Activated T-helper 1 cell treated with anti-CD3 and anti-CD28 coated beads, Interleukin-12 subunit alpha, Interleukin-12 subunit beta, Interleukin-2, Interleukin-4 antibody, amounts not matched to agents 30 ng/mL and 10 ng/mL and 1 ng/mL, durations not matched to agents 14 hours and 24 hours and 36 hours (primary cell): ENCODE measurements at regions of chr18 and their contacts with region 1.

Region 1: DNA sequence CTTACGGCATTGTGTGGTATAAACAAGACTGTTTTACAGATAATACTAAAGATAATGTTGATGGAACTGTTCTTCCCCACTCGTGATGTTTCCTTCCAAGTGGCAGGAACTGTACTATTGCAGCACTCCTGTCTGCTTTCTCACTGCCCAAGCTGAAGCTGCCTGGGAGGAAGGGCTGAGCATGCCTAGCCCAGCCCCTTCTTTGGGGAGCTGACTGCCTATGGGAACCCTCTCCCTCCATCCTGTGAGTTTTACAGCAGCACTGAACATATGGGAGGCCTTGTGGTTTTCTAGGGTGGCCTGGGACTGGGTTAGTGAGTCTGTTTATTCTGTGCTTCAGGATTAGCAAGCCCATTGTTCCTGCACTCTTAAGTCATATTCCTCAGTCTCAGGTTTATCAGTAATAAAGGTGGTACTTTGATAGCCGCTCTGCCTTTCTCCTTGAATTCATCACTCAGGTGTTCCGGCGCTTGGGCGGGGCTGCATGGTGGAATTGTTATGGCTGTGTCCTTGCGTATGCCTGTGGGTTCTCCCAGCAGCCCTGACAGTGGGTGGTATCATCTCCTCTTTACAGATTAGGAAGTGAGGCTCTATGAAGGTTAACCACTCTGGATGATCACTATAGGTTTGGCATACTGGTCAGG is 379.7 kb downstream of the PTPRM start:
- DNase-seq: peak; percentile 7
- H3K4me3 Mint-ChIP-seq: peak overlapping the region; percentile 85
- H3K27ac Mint-ChIP-seq: peak overlapping the region; percentile 57
- H3K4me1 Mint-ChIP-seq: peaks cover 12% of the 10 kb centered on the region
- H3K27me3 Mint-ChIP-seq: no peaks in the 10 kb centered on the region

Region 2: DNA sequence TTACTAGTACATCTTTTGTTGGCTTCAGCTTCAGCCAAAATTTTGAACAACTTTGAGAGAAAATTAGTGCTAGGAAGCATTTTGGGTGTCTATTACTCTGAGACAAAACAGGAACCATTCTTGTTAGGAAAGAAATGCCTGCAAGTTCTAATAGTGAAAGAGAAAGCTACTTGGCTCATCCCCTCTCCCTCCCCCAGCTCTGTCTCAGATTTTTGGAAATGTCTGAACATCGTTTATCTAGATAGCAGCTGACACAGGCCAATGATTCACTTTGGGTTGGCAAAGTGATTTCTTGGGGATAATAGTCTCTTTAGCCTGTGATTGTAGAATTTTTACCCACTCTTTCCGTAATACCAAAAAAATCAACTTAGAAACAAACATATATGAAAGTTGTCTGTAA is 422.1 kb before region 1 on chr18:
- intact Hi-C with region 1: no loop called
- DNase-seq: no peak
- H3K4me3 Mint-ChIP-seq: no peak overlapping the region
- H3K27ac Mint-ChIP-seq: no peak overlapping the region
- H3K4me1 Mint-ChIP-seq: no peaks in the 10 kb centered on the region
- H3K27me3 Mint-ChIP-seq: no peaks in the 10 kb centered on the region

Region 3: GRCh38 chr18:7958081-7958896 is 11.4 kb after region 1 on chr18:
- intact Hi-C with region 1: loop called (anchors 1 kb)
- DNase-seq: no peak
- H3K4me3 Mint-ChIP-seq: peak overlapping the region; percentile 66
- H3K27ac Mint-ChIP-seq: peak overlapping the region; percentile 92
- H3K4me1 Mint-ChIP-seq: peaks cover 39% of the 10 kb centered on the region
- H3K27me3 Mint-ChIP-seq: no peaks in the 10 kb centered on the region

Region 4: GRCh38 chr18:7980136-7980535 is 33.3 kb after region 1 on chr18:
- intact Hi-C with region 1: no loop called
- DNase-seq: no peak
- H3K4me3 Mint-ChIP-seq: no peak overlapping the region
- H3K27ac Mint-ChIP-seq: no peak overlapping the region
- H3K4me1 Mint-ChIP-seq: no peaks in the 10 kb centered on the region
- H3K27me3 Mint-ChIP-seq: no peaks in the 10 kb centered on the region

Region 5: DNA sequence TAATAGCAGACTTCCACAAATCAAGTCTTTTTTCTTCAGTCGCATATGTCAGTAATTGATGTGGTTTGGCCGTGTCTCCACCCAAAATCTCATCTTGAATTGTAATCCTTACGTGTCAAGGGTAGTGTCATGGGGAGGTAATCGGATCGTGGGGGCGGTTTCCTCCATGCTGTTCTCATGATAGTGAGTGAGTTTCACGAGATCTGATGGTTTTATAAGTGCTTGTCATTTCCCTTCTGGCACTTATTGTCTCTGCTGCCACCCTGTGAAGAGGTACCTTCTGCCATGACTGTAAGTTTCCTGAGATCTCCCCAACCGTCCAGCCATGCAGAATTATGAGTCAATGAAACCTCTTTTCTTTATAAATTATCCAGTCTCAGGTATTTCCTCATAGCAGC is 99.0 kb after region 1 on chr18:
- intact Hi-C with region 1: loop called (anchors 5 kb)
- DNase-seq: no peak
- H3K4me3 Mint-ChIP-seq: no peak overlapping the region
- H3K27ac Mint-ChIP-seq: no peak overlapping the region
- H3K4me1 Mint-ChIP-seq: peaks cover 15% of the 10 kb centered on the region
- H3K27me3 Mint-ChIP-seq: no peaks in the 10 kb centered on the region